ENCODE measurements at regions of chr19 and their contacts with region 1.

Region 1: DNA sequence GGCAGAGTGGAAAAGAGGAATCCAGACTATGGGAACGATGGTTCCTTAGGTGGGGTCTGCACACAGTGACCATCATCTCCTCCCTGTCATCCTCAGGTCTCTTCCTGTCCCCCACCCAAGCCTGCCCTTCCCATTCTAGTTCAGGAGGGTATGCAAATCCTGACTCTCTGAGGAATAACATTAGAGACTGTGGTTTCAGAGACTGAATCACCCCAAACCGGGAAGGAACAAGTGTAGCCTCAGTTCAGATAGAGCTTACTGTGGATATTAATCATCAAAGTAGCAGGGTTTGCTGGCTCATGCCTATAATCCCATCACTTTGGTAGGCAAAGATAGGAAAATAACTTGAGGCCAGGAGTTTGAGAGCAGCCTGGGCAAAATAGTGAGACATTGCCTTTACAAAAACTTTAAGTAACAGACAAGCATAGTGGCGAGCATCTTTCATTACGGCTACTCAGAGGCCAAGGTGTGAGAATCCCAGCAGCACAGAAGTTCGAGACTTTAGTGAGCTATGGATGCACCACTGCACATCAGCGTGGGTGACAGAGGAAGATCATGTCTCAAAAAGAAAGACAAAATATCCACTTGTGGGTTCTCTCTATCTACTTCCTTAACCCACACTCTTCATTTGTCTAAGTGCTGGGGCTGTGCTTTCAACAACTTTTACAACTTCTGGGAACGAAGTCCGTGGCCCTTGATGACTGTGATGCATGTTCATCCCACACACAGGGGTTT is 19.3 kb upstream of the LGALS13 start:
- DNase-seq: peak; percentile 52
- H3K4me3 Mint-ChIP-seq: no peak overlapping the region
- H3K27ac Mint-ChIP-seq: no peak overlapping the region
- H3K4me1 Mint-ChIP-seq: no peaks in the 10 kb centered on the region
- H3K27me3 Mint-ChIP-seq: peaks cover 39% of the 10 kb centered on the region

Region 2: GRCh38 chr19:39539519-39540332 is 43.3 kb before region 1 on chr19 and contains the start of gene EID2:
- CTCF ChIA-PET with region 1: no interaction called
- POLR2A ChIA-PET with region 1: no interaction called
- intact Hi-C with region 1: loop called (anchors 1 kb)
- DNase-seq: peak; percentile 98
- H3K4me3 Mint-ChIP-seq: peak within 1 kb of the TSS; percentile 94
- H3K27ac Mint-ChIP-seq: peak within 1 kb of the TSS; percentile 96
- H3K4me1 Mint-ChIP-seq: peaks cover 51% of the 10 kb centered on the region
- H3K27me3 Mint-ChIP-seq: peaks cover 2% of the 10 kb centered on the region
- total RNA-seq, gene EID2: 13.0 to 13.1 TPM

Region 3: GRCh38 chr19:39704181-39705044 is 121.4 kb after region 1 on chr19 and contains the start of gene LGALS14:
- CTCF ChIA-PET with region 1: no interaction called
- POLR2A ChIA-PET with region 1: no interaction called
- intact Hi-C with region 1: loop called (anchors 1 kb)
- DNase-seq: peak; percentile 65
- H3K4me3 Mint-ChIP-seq: peak within 1 kb of the TSS; percentile 40
- H3K27ac Mint-ChIP-seq: peak within 1 kb of the TSS; percentile 75
- H3K4me1 Mint-ChIP-seq: peaks cover 43% of the 10 kb centered on the region
- H3K27me3 Mint-ChIP-seq: peaks cover 5% of the 10 kb centered on the region
- total RNA-seq, gene LGALS14: 1.6 to 2.5 TPM

Measured in activated CD4-positive, alpha-beta memory T cell treated with anti-CD3 and anti-CD28 coated beads for 36 hours (primary cell).